Panc1 (cell line): ENCODE measurements at regions of chr17 and their contacts with region 1.

Region 1: GRCh38 chr17:73521376-73521775 is 122.9 kb downstream of the SDK2 start:
- DNase-seq: no peak
- ATAC-seq: no peak
- H3K4me3 ChIP-seq: no peak overlapping the region
- H3K27ac ChIP-seq: no peak overlapping the region
- H3K4me1 ChIP-seq: no peaks in the 10 kb centered on the region
- H3K27me3 ChIP-seq: no peaks in the 10 kb centered on the region; the same call in 1 of the 2 replicates
- CTCF ChIP-seq: no peak

Region 2: GRCh38 chr17:73107191-73107590 is 414.2 kb before region 1 on chr17:
- CTCF ChIA-PET with region 1: no interaction called
- POLR2A ChIA-PET with region 1: no interaction called
- in situ Hi-C with region 1: no loop called
- intact Hi-C with region 1: no loop called
- DNase-seq: no peak
- ATAC-seq: no peak
- H3K4me3 ChIP-seq: no peak overlapping the region
- H3K27ac ChIP-seq: no peak overlapping the region
- H3K4me1 ChIP-seq: peaks cover 5% of the 10 kb centered on the region; the same call in 1 of the 2 replicates
- H3K27me3 ChIP-seq: no peaks in the 10 kb centered on the region
- CTCF ChIP-seq: no peak

Region 3: GRCh38 chr17:73532421-73532901 is 11.1 kb after region 1 on chr17:
- CTCF ChIA-PET with region 1: no interaction called
- POLR2A ChIA-PET with region 1: no interaction called
- in situ Hi-C with region 1: no loop called
- intact Hi-C with region 1: no loop called
- DNase-seq: no peak
- ATAC-seq: no peak
- H3K4me3 ChIP-seq: no peak overlapping the region
- H3K27ac ChIP-seq: no peak overlapping the region
- H3K4me1 ChIP-seq: no peaks in the 10 kb centered on the region
- H3K27me3 ChIP-seq: peaks cover 9% of the 10 kb centered on the region; the same call in 1 of the 2 replicates
- CTCF ChIP-seq: no peak

Region 4: GRCh38 chr17:73835605-73836004 is 314.2 kb after region 1 on chr17:
- CTCF ChIA-PET with region 1: interaction called, 14 read pairs
- POLR2A ChIA-PET with region 1: no interaction called
- in situ Hi-C with region 1: no loop called
- intact Hi-C with region 1: no loop called
- DNase-seq: no peak
- ATAC-seq: no peak
- H3K4me3 ChIP-seq: no peak overlapping the region
- H3K27ac ChIP-seq: no peak overlapping the region
- H3K4me1 ChIP-seq: no peaks in the 10 kb centered on the region
- H3K27me3 ChIP-seq: peaks cover 24% of the 10 kb centered on the region
- CTCF ChIP-seq: no peak